Posterior cingulate gyrus (tissue), 11 donors: ENCODE measurements at regions of chr1 and their contacts with region 1.

Region 1: DNA sequence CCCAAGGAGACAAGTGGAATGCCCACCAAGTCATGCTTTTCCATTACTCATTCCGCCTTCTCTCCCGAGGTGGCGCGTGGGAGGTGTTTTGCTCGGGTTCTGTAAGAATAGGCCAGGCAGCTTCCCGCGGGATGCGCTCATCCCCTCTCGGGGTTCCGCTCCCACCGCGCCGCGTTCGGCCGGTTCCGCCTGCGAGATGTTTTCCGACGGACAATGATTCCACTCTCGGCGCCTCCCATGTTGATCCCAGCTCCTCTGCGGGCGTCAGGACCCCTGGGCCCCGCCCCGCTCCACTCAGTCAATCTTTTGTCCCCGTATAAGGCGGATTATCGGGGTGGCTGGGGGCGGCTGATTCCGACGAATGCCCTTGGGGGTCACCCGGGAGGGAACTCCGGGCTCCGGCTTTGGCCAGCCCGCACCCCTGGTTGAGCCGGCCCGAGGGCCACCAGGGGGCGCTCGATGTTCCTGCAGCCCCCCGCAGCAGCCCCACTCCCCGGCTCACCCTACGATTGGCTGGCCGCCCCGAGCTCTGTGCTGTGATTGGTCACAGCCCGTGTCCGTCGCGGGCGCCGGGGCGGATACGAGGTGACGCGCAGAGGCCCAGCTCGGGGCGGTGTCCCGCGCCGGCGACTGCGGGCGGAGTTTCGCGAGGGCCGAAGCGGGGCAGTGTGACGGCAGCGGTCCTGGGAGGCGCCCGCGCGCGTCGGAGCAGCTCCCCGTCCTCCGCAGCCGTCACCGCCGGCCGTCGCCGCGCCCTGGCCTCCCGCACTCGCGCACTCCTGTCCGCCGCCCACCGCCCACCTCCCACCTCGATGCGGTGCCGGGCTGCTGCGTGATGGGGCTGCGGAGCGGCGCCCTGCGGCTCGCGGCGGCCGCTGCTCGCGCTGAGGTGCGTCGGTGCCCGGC is at the start of gene KIF1B:
- DNase-seq: peak; percentile 98 to 100 (median 99)

Region 2: DNA sequence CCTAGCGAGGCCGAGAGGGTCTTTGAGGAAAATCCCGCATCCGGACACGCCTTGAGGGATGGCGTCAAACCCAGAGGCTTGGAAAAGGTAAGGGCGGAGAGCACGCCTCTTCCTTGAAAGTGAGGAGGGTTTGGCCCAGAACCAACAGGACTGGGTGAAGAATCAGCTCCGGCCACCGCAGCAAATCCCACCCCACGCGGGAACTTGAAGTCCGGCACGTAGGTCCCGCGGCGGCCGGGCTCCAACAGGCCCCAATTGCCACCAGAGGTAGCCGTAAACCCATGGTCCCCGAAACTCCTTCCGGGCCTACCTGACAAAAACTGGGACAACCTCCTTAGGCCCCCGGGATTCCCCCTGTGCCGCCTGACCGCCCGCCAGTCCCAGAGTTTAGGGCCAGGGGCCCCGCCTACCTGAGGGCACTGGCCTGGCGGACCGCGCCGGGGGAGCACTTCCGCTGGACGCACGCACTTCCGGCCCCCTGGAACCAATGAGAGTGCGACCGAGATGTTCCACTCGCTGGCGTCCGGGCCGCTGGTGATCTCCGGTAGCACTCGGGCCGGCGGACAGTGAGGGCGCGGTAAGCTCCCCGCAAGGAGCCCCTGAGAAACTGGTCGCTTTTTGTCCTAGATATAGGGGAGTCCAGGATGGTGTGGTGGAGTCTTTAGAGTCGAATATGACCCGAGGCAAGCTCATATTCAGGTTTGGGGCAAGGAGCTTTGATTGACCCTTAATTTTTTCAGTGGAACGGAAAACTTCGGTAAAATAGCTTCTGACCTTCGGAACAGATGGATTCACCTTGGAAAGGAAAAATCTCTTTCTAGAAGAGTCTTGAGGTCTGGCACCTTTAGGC is 267.0 kb before region 1 on chr1 and contains the starts of genes LZIC and NMNAT1:
- intact Hi-C with region 1: loop called (anchors 10 kb)
- DNase-seq: peak; percentile 89 to 99 (median 93)

Region 3: DNA sequence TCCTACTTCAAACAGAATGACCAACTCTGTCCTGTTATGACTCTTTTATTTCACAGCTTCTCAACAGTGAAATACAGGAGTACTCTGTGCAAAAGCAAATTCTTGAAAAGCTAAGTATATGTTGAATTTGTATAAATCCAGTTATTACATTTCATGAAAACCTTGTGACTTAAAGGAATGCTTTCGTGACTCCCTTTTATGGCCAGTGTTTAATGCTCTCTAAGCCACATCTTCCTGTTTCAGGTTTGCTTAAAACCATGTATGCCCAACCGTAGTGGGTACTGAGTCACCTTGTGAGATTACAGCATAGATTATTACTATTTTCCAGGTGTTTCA is 40.0 kb before region 1 on chr1:
- intact Hi-C with region 1: no loop called
- DNase-seq: no peak

Region 4: DNA sequence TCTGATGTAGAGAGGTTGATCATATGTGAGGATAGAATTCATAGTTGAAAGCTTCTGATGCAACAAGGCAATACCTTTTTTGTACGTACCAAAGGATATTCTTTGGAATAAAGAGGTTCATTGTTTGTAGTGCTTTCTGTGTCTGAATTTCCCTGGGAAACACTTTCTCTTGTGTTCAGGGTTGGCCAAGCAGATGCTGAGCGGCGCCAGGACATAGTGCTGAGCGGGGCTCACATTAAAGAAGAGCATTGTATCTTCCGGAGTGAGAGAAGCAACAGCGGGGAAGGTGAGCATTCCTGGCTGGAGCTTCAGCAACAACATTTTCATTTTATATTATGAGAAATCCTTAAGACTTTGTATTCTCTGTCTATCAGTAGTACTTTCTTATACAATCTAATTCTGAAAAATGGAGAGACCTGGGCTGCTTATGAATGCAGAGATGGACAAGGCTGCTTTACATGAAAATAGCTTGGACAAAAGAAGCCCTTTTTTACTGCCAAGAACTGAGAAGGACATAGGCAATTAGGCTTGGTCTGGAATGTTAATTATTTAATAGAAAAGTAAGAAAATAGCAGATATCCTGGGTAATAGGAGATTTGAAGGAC is 85.4 kb after region 1 on chr1:
- intact Hi-C with region 1: loop called (anchors 2 kb)
- DNase-seq: peak; percentile 35 to 91 (median 58)

Region 5: GRCh38 chr1:10326251-10326650 is 116.1 kb after region 1 on chr1:
- intact Hi-C with region 1: no loop called
- DNase-seq: no peak

Region 6: DNA sequence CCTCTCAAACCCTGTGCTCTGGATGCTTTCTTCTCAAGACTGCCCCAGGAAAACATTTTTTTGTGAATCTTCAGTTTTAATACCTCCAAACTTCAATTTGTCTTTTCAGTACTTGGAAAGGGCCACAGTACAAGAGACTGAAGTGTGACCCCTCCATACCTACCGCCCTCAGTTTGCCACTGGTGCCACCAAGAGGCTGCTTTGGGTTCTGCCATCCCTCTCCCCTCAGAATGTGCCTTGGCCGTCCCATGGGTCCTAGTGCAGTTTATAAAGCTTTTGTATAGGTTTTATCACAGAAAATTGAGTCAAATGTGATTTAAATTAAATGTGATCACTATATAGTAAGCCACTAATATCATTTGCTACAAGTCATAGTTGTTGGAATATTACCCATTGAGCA is 127.9 kb after region 1 on chr1:
- intact Hi-C with region 1: loop called (anchors 1 kb)
- DNase-seq: peak in 9 of 10 donors; percentile 37 to 95 (median 70)

Region 7: DNA sequence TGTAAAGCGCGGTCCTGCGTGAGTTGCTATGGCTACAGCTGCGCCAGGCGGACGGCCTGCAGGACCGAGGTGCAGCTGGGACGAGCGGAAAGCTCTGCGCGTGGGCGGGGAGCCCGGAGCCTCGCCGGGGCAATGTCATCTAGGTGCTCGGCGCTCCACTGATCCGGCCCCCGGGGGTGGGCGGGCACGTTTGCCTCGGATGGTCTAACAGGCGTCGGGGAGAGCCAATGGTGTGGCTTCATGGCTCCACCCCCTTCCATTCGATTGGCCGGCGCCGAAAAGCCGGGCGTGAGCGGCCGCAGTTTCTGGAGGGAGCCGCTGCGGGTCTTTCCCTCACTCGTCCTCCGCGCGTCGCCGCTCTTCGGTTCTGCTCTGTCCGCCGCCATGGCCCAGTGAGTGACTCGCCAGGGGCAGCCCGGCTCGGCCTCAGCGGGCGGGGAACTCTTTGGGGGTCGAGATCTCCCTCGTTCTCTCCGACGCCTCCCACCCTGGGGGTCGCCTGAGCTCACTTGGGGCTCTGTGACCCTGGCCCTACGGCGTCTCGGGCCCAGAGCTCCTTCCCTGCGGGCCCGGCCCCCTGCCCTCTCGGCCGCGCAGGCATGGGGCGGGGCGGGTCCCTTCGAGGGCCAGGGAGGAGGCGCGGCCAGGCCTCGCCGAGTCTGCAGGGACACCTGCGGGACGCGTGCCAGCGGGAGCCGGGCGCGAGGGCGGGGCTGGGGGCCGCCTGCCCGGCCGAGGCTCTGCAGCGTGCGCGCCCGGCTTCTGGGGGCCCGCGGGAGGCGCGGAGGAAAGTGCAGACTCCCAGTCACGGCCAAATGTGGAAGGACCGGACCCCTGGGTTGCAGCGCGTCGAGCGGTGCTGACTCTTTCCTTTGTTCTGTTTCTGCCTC is 188.8 kb after region 1 on chr1 and contains the start of gene PGD:
- intact Hi-C with region 1: loop called (anchors 2 kb)
- DNase-seq: peak; percentile 96 to 100 (median 99)